Head of caudate nucleus (tissue), 42 donors: ENCODE measurements at regions of chr3 and their contacts with region 1.

Region 1: GRCh38 chr3:136075218-136075808 is 109.8 kb downstream of the PPP2R3A start:
- DNase-seq: peak; percentile 32 to 92 (median 77)

Region 2: DNA sequence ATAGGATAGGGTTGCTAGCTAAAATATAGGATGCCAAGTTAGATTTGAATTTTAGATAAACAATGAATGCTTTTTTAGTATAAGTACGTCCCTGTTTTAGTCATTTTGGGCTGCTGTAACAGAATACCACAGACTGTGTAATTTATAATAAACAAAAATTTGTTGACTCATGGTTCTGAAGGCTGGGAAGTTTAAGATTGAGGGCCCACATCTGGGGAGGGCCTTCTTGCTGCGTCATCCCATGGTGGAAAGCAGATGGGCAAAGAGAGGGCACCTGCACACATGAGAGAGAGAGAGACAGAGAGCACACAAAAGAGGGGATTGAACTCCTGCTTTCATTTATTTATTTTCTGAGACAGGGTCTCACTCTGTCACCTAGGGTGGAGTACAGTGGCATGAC is 1033.7 kb before region 1 on chr3:
- intact Hi-C with region 1: no loop called
- DNase-seq: no peak

Region 3: DNA sequence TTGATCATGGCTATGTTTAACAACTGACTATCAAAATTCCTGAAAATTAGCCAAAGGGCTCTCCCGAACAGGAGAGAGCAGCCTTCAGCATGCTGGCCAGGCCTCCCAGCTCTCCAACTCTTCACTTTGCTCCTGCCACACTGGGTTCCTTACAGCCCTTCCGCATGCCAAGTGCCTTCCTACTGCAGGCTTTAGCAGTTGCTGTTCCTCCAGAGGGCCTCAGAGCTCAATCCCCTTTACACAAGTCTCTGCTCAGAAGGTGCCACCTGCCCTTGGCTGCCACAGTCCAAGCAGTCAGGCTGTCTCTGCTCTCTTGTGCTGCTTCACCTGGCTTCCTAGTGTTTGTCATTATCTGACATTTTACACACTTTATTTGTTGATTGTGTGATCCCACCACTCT is 662.8 kb before region 1 on chr3:
- intact Hi-C with region 1: no loop called
- DNase-seq: peak in 1 of 42 donors; percentile 2

Region 4: GRCh38 chr3:136196401-136197158 is 121.3 kb after region 1 on chr3:
- intact Hi-C with region 1: loop called (anchors 5 kb)
- DNase-seq: peak; percentile 93 to 99 (median 97)

Region 5: GRCh38 chr3:136250226-136250902 is 175.1 kb after region 1 on chr3 and contains the start of gene PCCB:
- intact Hi-C with region 1: loop called (anchors 5 kb)
- DNase-seq: peak; percentile 82 to 96 (median 92)

Region 6: DNA sequence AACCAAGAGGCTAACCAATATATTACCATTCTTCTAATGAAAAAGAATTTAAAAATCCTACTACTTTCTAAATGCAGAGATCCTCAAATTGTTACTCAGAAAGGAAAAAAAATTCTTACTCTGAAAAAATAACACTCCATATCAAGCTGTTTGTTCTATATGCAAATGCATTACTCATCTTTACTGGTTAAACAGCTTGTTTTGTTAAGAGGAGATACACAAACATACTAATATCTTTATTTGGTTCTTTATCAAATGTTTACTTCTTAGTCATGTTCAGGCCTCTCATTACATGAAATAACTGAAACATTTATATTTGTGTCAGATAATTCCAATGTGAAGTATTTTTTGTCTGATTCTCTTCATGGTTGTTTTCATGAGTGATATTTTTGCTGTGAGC is 321.6 kb after region 1 on chr3:
- intact Hi-C with region 1: loop called (anchors 10 kb)
- DNase-seq: no peak

Region 7: GRCh38 chr3:137013955-137014688 is 938.8 kb after region 1 on chr3:
- intact Hi-C with region 1: loop called (anchors 5 kb)
- DNase-seq: peak; percentile 74 to 98 (median 94)